Activated CD8-positive, alpha-beta T cell treated with anti-CD3 and anti-CD28 coated beads for 36 hours (primary cell): ENCODE measurements at regions of chr2 and their contacts with region 1.

Region 1: DNA sequence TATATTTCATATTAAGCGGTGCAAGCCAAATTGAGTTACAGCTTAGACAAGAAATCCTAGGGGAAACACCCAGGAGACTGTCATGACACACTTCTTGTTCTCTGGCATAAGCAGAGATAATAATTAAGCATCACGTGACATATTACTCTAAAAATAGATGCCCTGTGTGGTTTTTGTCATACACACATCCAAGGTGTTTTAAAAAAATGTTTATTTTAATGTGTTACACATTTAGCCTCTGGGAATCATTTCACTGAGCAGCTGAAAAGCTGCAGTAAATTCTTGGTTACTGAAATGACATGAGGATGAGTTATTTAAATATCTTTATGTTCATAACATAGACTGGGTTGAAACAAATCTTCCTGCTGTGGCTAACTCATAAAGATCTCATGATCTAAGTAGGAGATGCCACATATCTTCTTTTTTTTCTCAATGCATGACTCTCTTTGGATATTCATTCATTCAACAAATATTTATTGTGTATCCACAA is 38.0 kb upstream of the ERMN start:
- DNase-seq: no peak
- ATAC-seq: peak; percentile 43
- H3K4me3 Mint-ChIP-seq: no peak overlapping the region
- H3K27ac Mint-ChIP-seq: peak overlapping the region; percentile 43
- H3K4me1 Mint-ChIP-seq: peaks cover 38% of the 10 kb centered on the region
- H3K27me3 Mint-ChIP-seq: no peaks in the 10 kb centered on the region
- CTCF ChIP-seq: no peak

Region 2: GRCh38 chr2:157261199-157261783 is 102.4 kb before region 1 on chr2:
- CTCF ChIA-PET with region 1: no interaction called
- POLR2A ChIA-PET with region 1: no interaction called
- intact Hi-C with region 1: no loop called
- DNase-seq: peak; percentile 85
- ATAC-seq: peak; percentile 77
- H3K4me3 Mint-ChIP-seq: peak overlapping the region; percentile 39
- H3K27ac Mint-ChIP-seq: peak overlapping the region; percentile 78
- H3K4me1 Mint-ChIP-seq: peaks cover 32% of the 10 kb centered on the region
- H3K27me3 Mint-ChIP-seq: peaks cover 12% of the 10 kb centered on the region
- CTCF ChIP-seq: no peak

Region 3: GRCh38 chr2:157404363-157404762 is 40.7 kb after region 1 on chr2:
- CTCF ChIA-PET with region 1: no interaction called
- POLR2A ChIA-PET with region 1: no interaction called
- intact Hi-C with region 1: loop called (anchors 5 kb)
- DNase-seq: peak; percentile 78
- ATAC-seq: peak; percentile 89
- H3K4me3 Mint-ChIP-seq: peak overlapping the region; percentile 36
- H3K27ac Mint-ChIP-seq: peak overlapping the region; percentile 93
- H3K4me1 Mint-ChIP-seq: peaks cover 77% of the 10 kb centered on the region
- H3K27me3 Mint-ChIP-seq: no peaks in the 10 kb centered on the region
- CTCF ChIP-seq: no peak

Region 4: GRCh38 chr2:157468931-157469708 is 105.5 kb after region 1 on chr2:
- CTCF ChIA-PET with region 1: no interaction called
- POLR2A ChIA-PET with region 1: no interaction called
- intact Hi-C with region 1: no loop called
- DNase-seq: no peak
- ATAC-seq: peak; percentile 73
- H3K4me3 Mint-ChIP-seq: peak overlapping the region; percentile 77
- H3K27ac Mint-ChIP-seq: peak overlapping the region; percentile 99
- H3K4me1 Mint-ChIP-seq: peaks cover 93% of the 10 kb centered on the region
- H3K27me3 Mint-ChIP-seq: no peaks in the 10 kb centered on the region
- CTCF ChIP-seq: no peak

Region 5: GRCh38 chr2:157509744-157510143 is 146.1 kb after region 1 on chr2:
- CTCF ChIA-PET with region 1: no interaction called
- POLR2A ChIA-PET with region 1: no interaction called
- intact Hi-C with region 1: no loop called
- DNase-seq: no peak
- ATAC-seq: no peak
- H3K4me3 Mint-ChIP-seq: no peak overlapping the region
- H3K27ac Mint-ChIP-seq: no peak overlapping the region
- H3K4me1 Mint-ChIP-seq: peaks cover 4% of the 10 kb centered on the region
- H3K27me3 Mint-ChIP-seq: peaks cover 17% of the 10 kb centered on the region
- CTCF ChIP-seq: no peak